HEK293 (cell line): ENCODE measurements at regions of chr17 and their contacts with region 1.

Region 1: GRCh38 chr17:41688699-41689496 is at the start of gene EIF1:
- H3K4me3 ChIP-seq: peak within 1 kb of the TSS; percentile 96
- H3K27ac ChIP-seq: peak within 1 kb of the TSS; percentile 89
- H3K4me1 ChIP-seq: no peaks in the 10 kb centered on the region
- CTCF ChIP-seq: 0 out of 2 replicates have a peak, but pooled peaks have one; percentile 17

Region 2: DNA sequence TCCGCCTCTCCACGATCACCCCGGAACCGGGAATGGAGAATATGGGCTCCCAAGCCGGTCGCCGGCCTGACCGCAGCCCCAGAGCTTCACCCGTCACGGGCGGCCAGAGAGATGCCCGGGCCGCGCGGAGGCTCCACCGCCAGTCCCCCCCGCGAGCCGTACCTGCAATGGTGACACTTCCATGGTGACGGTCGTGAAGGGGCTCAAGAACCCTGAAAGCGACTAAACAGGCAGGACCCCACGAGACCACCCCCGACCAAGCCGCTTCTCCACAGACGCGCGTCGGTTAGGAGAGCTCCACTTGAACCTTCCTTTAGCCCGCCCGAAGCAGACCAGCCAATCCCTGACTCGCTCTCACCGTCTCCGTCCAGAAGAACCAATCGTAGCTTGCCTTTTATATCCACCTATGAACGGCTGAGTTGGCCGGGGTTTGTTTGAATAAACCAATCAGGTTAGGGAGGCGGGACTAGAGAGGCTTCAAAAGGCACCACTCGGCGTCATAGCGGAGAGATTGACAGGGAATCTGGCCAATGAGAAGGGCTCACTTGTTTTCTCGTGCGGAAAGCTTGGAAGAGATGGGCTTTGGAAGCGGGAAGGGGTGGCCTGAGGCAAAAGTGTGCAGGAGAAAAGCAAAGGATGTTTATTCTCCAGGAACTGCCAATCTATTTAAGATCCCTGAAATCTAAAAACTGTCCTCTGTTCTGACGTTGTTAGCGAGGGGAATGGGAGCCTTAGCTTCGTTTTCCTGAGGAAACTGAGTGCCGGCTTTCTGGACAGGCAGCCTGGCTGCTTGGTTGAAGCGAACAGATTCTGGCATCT is 1271.1 kb before region 1 on chr17 and contains the start of gene TOP2A:
- CTCF ChIA-PET with region 1: no interaction called
- POLR2A ChIA-PET with region 1: interaction called, 16 read pairs
- H3K4me3 ChIP-seq: peak within 1 kb of the TSS; percentile 96
- H3K27ac ChIP-seq: peak within 1 kb of the TSS; percentile 94
- H3K4me1 ChIP-seq: peaks cover 3% of the 10 kb centered on the region
- CTCF ChIP-seq: 0 out of 2 replicates have a peak, but pooled peaks have one; percentile 5

Region 3: GRCh38 chr17:41672153-41672552 is 16.7 kb before region 1 on chr17:
- CTCF ChIA-PET with region 1: interaction called, 126 read pairs
- POLR2A ChIA-PET with region 1: interaction called, 53 read pairs
- H3K4me3 ChIP-seq: no peak overlapping the region
- H3K27ac ChIP-seq: no peak overlapping the region
- H3K4me1 ChIP-seq: no peaks in the 10 kb centered on the region
- CTCF ChIP-seq: no peak

Region 4: GRCh38 chr17:41717408-41718286 is 28.7 kb after region 1 on chr17:
- CTCF ChIA-PET with region 1: interaction called, 103 read pairs
- POLR2A ChIA-PET with region 1: interaction called, 21 read pairs
- H3K4me3 ChIP-seq: no peak overlapping the region
- H3K27ac ChIP-seq: no peak overlapping the region
- H3K4me1 ChIP-seq: 0 out of 2 replicates have a peak, but pooled peaks cover 4% of the 10 kb centered on the region
- CTCF ChIP-seq: no peak

Region 5: GRCh38 chr17:41738077-41738735 is 49.3 kb after region 1 on chr17:
- CTCF ChIA-PET with region 1: interaction called, 3 read pairs
- POLR2A ChIA-PET with region 1: interaction called, 10 read pairs
- H3K4me3 ChIP-seq: no peak overlapping the region
- H3K27ac ChIP-seq: peak overlapping the region; percentile 11; the same call in 1 of the 2 replicates
- H3K4me1 ChIP-seq: peaks cover 2% of the 10 kb centered on the region; the same call in 1 of the 2 replicates
- CTCF ChIP-seq: peak; percentile 96

Region 6: DNA sequence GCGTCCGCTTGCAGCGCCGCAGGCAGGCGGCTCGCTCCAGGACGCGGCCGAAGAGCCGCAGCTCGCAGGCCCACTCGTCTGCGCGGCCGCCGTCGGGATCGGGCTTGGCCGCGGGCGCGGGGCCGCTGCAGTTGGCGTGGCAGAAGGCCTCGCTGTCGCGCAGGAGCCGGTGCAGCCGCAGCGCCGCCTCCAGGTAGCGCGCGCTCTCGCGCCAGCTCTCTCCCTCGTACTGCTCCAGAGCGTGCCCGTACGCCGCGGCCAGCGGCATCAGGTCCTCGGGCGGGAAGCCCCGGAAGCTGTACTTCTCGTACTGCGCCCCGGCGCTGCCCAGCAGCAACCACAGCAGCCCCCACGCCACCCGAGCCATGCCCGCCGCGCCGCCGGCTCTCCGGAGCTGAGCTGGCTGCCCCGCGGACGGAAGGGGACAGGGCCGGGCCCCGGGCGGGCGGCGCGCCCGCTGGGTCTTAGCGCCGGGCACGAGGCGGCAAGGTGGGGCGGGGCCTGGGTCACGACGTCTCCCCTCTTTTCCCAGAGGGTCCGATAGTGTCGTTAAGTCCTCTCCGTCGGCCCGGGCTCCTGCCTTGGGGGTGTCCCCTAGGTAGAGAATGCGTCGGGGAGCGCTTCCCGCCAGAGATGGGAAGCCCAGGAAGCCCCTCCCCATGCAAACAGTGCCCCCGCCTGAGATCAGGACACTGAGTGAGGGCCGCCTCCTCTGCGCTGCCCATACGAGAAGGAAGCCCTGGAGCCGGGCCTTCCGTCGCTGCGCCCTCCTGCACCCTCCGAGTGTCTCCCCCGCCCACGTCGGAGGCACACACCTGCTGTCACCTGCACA is 122.9 kb after region 1 on chr17 and contains the start of gene P3H4:
- CTCF ChIA-PET with region 1: no interaction called
- POLR2A ChIA-PET with region 1: interaction called, 17 read pairs
- H3K4me3 ChIP-seq: peak within 1 kb of the TSS; percentile 73
- H3K27ac ChIP-seq: peak within 1 kb of the TSS; percentile 89
- H3K4me1 ChIP-seq: 0 out of 2 replicates have a peak, but pooled peaks cover 8% of the 10 kb centered on the region
- CTCF ChIP-seq: peak; percentile 78

Region 7: GRCh38 chr17:41972571-41973411 is 283.9 kb after region 1 on chr17:
- CTCF ChIA-PET with region 1: no interaction called
- POLR2A ChIA-PET with region 1: no interaction called
- H3K4me3 ChIP-seq: no peak overlapping the region
- H3K27ac ChIP-seq: peak overlapping the region; percentile 17; the same call in 1 of the 2 replicates
- H3K4me1 ChIP-seq: no peaks in the 10 kb centered on the region
- CTCF ChIP-seq: no peak

Region 8: DNA sequence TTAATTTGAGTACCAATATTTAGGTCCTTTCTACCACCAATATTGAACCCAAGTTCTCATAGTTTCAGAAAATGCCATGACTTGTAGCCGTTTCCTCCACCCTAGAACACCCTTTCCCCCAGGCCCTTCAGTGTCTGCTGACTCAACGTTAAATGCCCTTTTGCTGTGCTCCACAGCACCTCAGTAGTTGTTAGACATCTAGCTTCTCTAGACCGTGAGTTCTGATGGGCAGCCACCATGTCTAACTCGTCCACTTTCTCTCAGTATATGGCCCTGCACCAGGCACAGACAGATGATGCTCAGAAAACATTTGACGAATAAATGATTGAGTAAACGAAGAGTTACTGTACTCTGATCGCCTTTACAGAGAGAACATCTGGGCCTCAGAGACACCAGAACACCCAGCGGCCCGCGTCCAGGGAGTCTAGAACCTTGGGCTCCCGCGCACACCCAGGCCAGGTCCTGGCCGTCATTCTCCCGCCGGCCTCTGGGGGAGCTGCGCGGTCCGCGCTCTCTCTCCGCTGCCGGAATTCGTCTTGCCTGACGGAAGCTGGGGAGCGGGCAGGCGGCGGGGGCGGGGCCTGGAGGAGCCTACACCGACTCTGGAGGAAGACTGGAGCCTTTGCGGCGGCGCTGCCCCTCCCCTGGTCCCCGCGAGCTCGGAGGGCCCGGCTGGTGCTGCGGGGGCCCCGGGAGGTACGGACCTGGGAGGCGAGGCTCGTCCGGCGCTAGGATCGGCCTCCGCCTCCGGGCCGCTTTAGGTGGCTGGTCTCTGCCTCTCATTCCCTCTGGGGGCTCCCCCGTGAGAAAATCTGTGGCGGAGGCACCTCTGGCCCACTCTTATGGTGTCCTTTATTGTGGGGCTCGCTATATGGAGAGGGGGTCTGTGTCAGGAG is 330.9 kb after region 1 on chr17 and contains the start of gene NKIRAS2:
- CTCF ChIA-PET with region 1: no interaction called
- POLR2A ChIA-PET with region 1: interaction called, 13 read pairs
- H3K4me3 ChIP-seq: peak within 1 kb of the TSS; percentile 93
- H3K27ac ChIP-seq: peak within 1 kb of the TSS; percentile 69; the same call in 1 of the 2 replicates
- H3K4me1 ChIP-seq: peaks cover 3% of the 10 kb centered on the region; the same call in 1 of the 2 replicates
- CTCF ChIP-seq: peak; percentile 94